Ovary (tissue), 10 donors: ENCODE measurements at regions of chr5 and their contacts with region 1.

Region 1: DNA sequence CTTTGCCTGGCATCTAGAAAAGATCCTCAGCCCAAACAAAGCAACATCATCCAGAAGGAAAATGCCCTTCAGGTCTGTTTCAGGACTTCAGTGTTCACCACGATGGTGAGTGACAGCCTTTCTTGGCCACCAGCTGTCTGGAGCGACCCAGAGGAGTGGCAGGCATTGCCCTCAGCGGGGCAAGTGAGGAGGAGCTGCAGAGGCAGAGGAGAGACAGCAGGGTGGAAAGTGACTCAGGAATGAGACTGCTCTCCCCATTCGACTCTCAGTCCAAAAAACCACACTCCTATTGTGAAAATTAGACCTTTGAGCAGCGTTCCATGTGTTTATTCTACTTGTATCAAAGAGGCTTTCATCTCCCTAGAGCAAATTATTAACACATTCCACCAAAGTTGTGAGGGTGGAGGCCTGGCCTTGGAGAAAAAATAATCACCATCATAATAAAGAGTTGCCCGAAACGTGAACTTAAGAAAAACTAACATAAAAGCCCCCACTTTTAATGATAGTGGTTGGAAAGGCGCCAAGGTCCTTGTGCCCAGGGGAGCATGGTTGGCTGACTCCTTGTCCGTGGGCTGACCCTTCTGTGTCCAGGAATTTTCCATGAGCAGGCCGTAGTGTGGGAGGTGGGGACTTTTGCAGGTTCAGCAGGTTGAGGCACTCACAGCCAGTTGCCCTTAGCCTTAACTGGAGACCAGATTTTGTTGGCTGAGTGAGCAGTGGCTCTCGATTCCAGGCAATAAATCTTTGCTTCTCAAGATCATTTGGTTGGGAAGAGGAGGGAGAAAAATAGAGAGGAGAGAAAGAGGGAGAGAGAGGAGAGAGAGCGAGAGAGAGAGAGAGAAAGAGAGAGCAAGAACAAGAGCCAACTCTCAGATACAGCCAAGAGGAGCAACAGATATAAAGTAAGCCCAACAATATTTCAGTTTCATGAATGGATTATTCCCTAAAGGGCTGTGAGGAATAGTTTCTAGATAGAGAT is 125.9 kb upstream of the ANKRD55 start:
- DNase-seq: peak; percentile 73 to 92 (median 89)
- H3K4me3 ChIP-seq: no peak overlapping the region
- H3K27ac ChIP-seq: peak overlapping the region in 1 of 2 donors; percentile 54
- H3K4me1 ChIP-seq: peaks cover 11% of the 10 kb centered on the region
- H3K27me3 ChIP-seq: no peaks in the 10 kb centered on the region
- CTCF ChIP-seq: peak in 1 of 3 donors; percentile 21
- EP300 ChIP-seq: no peak
- POLR2A ChIP-seq: no peak

Region 2: GRCh38 chr5:56279979-56280378 is 79.0 kb before region 1 on chr5:
- intact Hi-C with region 1: loop called in 2 of 4 experiments (anchors 5 kb)
- DNase-seq: no peak
- H3K4me3 ChIP-seq: no peak overlapping the region
- H3K27ac ChIP-seq: no peak overlapping the region
- H3K4me1 ChIP-seq: peaks cover 2% of the 10 kb centered on the region
- H3K27me3 ChIP-seq: no peaks in the 10 kb centered on the region
- CTCF ChIP-seq: no peak
- EP300 ChIP-seq: no peak
- POLR2A ChIP-seq: no peak

Region 3: DNA sequence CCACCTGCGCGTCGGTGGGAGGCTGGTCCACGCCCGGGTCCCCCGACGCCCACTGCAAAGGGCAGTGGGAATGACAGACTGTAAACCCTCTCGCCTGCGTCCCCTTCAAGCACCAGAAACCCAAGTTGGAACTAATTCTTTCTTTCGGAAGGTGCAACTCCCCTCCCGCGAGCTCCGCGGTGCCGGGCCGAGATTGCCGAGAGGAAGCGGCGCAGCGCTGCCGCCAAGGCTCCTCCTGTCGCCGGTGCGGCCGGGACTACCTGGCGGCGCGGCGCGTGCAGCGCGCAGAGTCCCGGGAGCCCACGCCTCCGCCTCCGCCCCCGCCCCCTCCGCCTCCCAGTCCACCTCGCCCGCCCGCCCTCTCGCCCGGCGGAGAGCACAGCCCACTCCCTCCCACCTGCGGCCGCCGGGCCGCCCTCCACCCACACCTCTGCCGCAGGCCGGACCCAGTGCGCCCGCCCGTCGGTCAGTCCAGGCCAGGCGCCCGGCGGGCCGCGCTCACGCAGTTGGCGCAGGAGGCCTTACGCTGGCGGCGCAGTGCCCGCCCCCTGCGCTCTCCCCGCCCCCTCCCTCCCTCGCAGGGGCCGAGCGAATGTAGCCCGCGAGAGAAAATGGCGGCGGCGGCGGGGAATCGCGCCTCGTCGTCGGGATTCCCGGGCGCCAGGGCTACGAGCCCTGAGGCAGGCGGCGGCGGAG is 456.1 kb after region 1 on chr5 and contains the start of gene MAP3K1:
- intact Hi-C with region 1: loop called in 1 of 4 experiments (anchors 5 kb)
- DNase-seq: peak; percentile 71 to 89 (median 80)
- H3K4me3 ChIP-seq: peak within 1 kb of the TSS; percentile 81
- H3K27ac ChIP-seq: peak within 1 kb of the TSS; percentile 76 to 90
- H3K4me1 ChIP-seq: peaks cover 2% of the 10 kb centered on the region
- H3K27me3 ChIP-seq: no peaks in the 10 kb centered on the region
- CTCF ChIP-seq: no peak
- EP300 ChIP-seq: no peak
- POLR2A ChIP-seq: no peak
- total RNA-seq, gene MAP3K1: 15.7 to 29.8 (median 21.7) TPM